PC-9 (cell line): ENCODE measurements at regions of chr2 and their contacts with region 1.

Region 1: GRCh38 chr2:209314653-209315052 is 109.2 kb upstream of the MAP2 start:
- DNase-seq: no peak
- H3K4me3 ChIP-seq: no peak overlapping the region
- H3K27ac ChIP-seq: no peak overlapping the region
- H3K4me1 ChIP-seq: no peaks in the 10 kb centered on the region
- H3K27me3 ChIP-seq: no peaks in the 10 kb centered on the region
- CTCF ChIP-seq: no peak

Region 2: DNA sequence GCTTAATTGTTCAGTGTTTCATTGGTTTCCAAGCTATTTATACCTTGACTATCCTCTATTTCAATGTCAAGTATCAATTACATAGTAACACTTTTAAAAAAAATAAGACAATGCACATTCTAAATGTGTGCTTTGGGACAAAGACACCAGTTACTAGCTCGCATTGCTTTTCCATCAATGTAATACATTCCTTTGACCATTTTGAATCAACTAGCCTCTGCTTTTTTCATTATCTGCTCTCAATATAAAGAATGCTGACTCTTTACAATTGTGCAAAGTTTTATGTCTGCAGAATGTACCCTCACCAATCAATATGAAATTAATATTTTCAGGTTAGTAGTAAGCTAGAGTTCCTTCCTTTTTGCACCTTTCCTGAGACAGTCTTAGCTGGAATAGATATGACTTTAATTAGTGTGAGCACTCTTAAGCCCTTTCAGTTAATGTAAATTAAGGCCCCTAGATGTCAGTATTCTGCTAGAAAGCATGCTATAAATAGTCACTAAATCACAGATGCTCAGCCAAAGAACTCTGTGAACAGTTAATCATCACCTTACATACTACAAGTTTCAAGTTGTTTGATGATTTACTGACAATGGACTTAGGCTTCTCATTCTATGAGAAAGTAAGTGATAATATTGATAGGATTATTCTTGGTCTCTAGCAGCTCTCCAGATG is 494.5 kb before region 1 on chr2:
- CTCF ChIA-PET with region 1: no interaction called
- POLR2A ChIA-PET with region 1: no interaction called
- intact Hi-C with region 1: loop called (anchors 5 kb)
- DNase-seq: no peak
- H3K4me3 ChIP-seq: no peak overlapping the region
- H3K27ac ChIP-seq: no peak overlapping the region
- H3K4me1 ChIP-seq: no peaks in the 10 kb centered on the region
- H3K27me3 ChIP-seq: no peaks in the 10 kb centered on the region
- CTCF ChIP-seq: peak; percentile 45; the same call in 1 of the 2 replicates